ENCODE measurements at regions of chr3 and their contacts with region 1.

Region 1: DNA sequence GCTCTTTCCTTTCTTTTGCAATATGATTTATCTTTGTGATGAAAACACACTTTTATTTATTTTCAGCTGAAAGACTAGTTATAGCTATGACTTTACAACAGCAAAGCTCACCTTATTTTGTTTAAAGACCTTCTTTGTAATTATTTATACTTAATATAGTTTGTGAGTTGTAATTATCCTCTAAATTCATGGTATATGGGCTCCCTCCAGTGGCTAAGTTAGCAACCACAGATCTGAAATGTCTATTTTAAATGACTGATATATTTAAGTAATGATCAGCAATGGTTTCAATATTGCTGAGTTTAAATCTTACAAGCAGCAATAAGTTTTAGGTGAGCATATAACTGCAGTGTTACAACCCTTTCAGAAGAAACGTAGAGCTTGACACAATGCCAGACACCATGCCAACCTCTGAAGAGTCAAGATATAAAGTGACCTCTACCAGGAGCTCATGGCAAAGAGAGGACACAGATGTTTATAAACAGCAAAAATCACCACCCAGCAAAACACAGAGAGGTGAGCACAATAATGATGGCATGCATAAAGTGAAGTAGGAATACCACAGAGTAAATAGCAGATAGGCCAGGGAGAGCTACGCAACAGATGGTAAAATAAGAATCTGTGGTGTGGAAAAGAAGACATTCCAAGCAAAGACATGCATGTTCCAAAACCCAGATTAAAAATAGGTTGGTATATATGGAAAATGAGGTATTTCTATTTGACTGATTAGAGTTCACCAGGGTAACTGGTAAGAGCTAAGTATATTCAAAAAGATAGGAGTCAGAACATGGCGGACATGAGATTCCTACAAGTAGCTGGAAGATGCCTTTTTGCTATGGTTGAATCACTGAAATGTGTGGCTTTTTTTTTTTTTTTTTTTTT is 143.7 kb upstream of the ZNF385D start:
- DNase-seq: peak; percentile 17
- H3K4me3 Mint-ChIP-seq: no peak overlapping the region
- H3K27ac Mint-ChIP-seq: no peak overlapping the region
- H3K4me1 Mint-ChIP-seq: no peaks in the 10 kb centered on the region
- H3K27me3 Mint-ChIP-seq: no peaks in the 10 kb centered on the region
- CTCF ChIP-seq: peak; percentile 30

Region 2: DNA sequence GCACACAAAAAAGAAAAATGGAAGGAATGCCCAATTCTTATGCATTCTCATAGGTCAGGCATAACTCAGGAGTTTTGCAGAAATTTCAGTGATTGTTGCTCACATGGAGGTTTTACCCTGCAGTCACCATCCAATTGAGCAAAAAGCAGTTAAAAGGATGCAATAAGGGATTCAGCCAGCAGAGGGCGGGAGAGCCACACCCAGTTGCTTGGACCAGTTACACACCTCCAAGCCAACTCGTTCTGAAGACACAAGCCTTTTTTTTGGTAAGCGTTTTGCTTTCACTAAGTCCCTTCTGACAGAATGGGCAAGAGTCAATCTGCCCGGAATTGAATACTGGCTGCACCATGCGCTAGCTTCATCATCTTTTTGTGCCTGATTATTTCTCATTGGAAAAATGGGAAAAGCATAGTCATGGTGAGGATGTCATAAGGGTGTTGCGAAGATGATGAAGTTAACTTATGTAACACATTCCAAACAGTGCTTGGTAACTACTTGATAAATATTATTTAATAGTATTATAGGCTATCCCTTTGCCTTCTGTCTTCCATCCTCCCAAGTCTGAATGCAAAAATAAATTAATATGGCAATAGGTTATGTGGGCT is 1554.3 kb before region 1 on chr3:
- CTCF ChIA-PET with region 1: interaction called, 5 read pairs
- intact Hi-C with region 1: loop called (anchors 1 kb)
- DNase-seq: peak; percentile 75
- H3K4me3 Mint-ChIP-seq: no peak overlapping the region
- H3K27ac Mint-ChIP-seq: no peak overlapping the region
- H3K4me1 Mint-ChIP-seq: no peaks in the 10 kb centered on the region
- H3K27me3 Mint-ChIP-seq: no peaks in the 10 kb centered on the region
- CTCF ChIP-seq: peak; percentile 63

Region 3: DNA sequence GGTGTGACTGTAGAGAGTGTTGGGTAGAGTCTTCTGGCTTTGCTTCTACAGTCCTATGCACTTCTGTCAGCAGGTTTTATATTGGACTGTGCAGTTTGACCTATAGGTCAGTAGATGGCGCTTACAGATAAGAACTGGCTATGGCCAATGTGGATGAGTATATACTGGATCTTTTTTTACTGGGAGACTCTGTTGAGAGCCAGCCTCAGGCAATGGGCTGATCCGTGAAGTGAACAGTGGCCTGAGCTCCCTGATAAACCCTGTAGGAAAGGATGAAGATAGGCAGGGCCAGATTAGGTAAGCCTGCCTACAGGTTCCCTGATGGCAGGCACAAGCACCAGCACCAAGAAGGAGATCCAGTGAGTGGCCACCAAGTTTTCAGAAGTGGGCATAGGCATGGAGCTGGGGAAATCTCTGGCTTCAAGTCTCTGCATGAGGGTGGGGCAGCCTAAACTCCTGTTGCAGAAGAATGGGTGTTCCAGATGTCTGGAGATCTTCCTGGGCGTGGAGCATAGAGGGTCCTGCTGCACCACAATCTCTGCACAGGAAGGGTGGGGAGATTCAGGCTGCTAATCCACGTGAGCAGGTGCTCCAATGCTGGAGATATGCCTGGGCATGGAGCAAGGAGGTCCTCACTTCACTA is 1382.7 kb before region 1 on chr3:
- CTCF ChIA-PET with region 1: no interaction called
- intact Hi-C with region 1: loop called (anchors 2 kb)
- DNase-seq: peak; percentile 12
- H3K4me3 Mint-ChIP-seq: no peak overlapping the region
- H3K27ac Mint-ChIP-seq: no peak overlapping the region
- H3K4me1 Mint-ChIP-seq: peaks cover 8% of the 10 kb centered on the region
- H3K27me3 Mint-ChIP-seq: no peaks in the 10 kb centered on the region
- CTCF ChIP-seq: peak; percentile 39

Region 4: GRCh38 chr3:20930034-20930433 is 964.7 kb before region 1 on chr3:
- CTCF ChIA-PET with region 1: no interaction called
- intact Hi-C with region 1: loop called (anchors 5 kb)
- DNase-seq: peak; percentile 45
- H3K4me3 Mint-ChIP-seq: no peak overlapping the region
- H3K27ac Mint-ChIP-seq: no peak overlapping the region
- H3K4me1 Mint-ChIP-seq: peaks cover 19% of the 10 kb centered on the region
- H3K27me3 Mint-ChIP-seq: no peaks in the 10 kb centered on the region
- CTCF ChIP-seq: peak; percentile 27

Region 5: DNA sequence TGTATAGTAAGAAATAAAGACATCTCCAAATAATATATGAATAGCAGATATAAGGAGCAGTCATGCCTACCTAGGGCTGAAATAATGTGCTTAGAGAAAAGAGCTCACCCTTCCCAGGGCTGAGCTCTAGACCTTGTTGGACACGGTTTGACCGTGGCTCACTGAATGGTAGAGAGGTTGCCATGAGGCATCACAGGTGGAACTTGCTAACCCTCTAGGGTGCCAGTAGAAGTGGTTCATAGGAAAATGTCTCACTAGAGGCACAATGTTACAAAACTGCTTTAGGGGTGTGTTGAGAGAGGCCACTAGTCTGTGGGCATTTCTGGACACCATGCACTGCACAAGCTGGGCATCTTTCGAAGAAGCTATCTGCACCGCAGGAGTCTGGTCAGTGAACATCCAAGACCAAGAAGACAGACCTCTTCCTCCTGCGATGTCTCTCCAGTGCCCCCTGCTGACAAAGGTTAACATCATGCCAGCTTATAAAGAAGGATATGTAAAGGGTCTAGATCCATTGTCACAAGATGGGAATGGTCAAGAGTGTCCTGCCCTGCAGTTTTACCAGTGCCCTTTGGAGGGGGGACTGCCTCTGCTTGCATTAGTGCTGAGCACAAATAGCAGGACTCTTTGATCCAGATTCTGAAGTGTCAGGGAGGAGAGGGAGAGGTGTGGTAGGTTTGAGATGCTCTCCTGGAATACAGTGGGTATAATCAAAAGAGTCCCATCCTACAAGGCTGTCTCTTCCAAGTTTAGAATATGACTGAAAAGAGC is 410.5 kb before region 1 on chr3:
- CTCF ChIA-PET with region 1: no interaction called
- intact Hi-C with region 1: loop called (anchors 2 kb)
- DNase-seq: peak; percentile 80
- H3K4me3 Mint-ChIP-seq: no peak overlapping the region
- H3K27ac Mint-ChIP-seq: no peak overlapping the region
- H3K4me1 Mint-ChIP-seq: no peaks in the 10 kb centered on the region
- H3K27me3 Mint-ChIP-seq: no peaks in the 10 kb centered on the region
- CTCF ChIP-seq: peak; percentile 70

Region 6: GRCh38 chr3:21752749-21753347 is 141.9 kb before region 1 on chr3:
- CTCF ChIA-PET with region 1: interaction called, 4 read pairs
- intact Hi-C with region 1: loop called (anchors 1 kb)
- DNase-seq: peak; percentile 8
- H3K4me3 Mint-ChIP-seq: no peak overlapping the region
- H3K27ac Mint-ChIP-seq: no peak overlapping the region
- H3K4me1 Mint-ChIP-seq: no peaks in the 10 kb centered on the region
- H3K27me3 Mint-ChIP-seq: no peaks in the 10 kb centered on the region
- CTCF ChIP-seq: no peak

Region 7: DNA sequence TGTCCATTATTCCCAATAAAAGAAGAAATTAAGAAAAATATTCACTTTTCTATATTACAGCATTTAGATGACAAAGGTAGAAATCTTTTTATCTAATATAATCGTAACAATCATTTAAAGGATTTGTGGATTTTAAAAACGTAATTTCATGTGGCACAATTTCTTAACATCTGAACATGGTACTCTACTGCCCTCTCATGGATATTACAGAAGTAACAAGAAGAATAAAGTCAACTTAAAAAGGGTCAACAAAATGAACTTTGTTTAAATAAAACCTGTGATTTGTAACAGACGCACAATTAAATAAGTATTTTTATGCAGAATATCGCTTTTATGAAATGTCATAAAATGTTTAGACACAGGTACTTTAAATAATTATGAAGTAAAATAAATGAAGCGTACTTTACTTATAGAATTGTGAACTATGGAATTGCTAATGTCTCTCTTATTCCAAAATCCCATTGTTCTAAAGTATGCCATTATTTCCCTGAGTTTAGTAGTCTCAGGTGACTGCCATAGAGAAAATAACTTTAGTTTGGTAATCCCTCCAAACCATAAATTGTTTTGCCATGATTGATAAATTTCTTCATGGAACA is 223.1 kb after region 1 on chr3:
- CTCF ChIA-PET with region 1: no interaction called
- intact Hi-C with region 1: loop called (anchors 5 kb)
- DNase-seq: no peak
- H3K4me3 Mint-ChIP-seq: no peak overlapping the region
- H3K27ac Mint-ChIP-seq: no peak overlapping the region
- H3K4me1 Mint-ChIP-seq: peaks cover 9% of the 10 kb centered on the region
- H3K27me3 Mint-ChIP-seq: no peaks in the 10 kb centered on the region
- CTCF ChIP-seq: peak; percentile 27

Region 8: DNA sequence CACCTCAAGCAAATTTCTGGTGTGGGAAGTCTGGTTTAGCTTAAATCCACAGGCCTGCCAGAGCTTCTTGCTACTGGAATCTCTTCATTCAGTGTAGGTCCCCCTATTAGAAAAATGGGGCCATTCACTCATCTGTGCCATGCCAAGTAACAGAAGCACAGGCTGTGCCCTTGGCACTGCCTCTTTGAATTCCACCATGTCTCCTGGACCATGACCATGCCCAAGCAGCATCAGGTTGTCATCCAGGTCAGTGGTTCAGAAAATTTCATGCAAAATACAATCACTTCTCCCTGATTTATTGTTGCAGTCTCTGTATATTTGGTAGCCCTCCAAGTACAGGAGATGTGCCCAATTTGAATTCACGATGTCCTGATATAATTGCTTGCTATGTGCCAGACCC is 458.4 kb after region 1 on chr3:
- CTCF ChIA-PET with region 1: no interaction called
- intact Hi-C with region 1: no loop called
- DNase-seq: no peak
- H3K4me3 Mint-ChIP-seq: no peak overlapping the region
- H3K27ac Mint-ChIP-seq: no peak overlapping the region
- H3K4me1 Mint-ChIP-seq: no peaks in the 10 kb centered on the region
- H3K27me3 Mint-ChIP-seq: no peaks in the 10 kb centered on the region
- CTCF ChIP-seq: no peak